ENCODE measurements at regions of chr4 and their contacts with region 1.

Region 1: GRCh38 chr4:42568610-42569207 is 88.2 kb downstream of the ATP8A1 start:
- DNase-seq: peak; percentile 34
- H3K4me3 ChIP-seq: no peak overlapping the region
- H3K27ac ChIP-seq: no peak overlapping the region
- H3K4me1 ChIP-seq: no peaks in the 10 kb centered on the region
- H3K27me3 ChIP-seq: peaks cover 2% of the 10 kb centered on the region
- CTCF ChIP-seq: peak; percentile 52 to 75

Region 2: GRCh38 chr4:42865572-42866189 is 297.0 kb after region 1 on chr4:
- CTCF ChIA-PET with region 1: interaction called, 5 read pairs
- dilution Hi-C with region 1: no loop called
- in situ Hi-C with region 1: loop called (anchors 5 kb)
- intact Hi-C with region 1: loop called (anchors 1 kb)
- DNase-seq: peak; percentile 46
- H3K4me3 ChIP-seq: no peak overlapping the region
- H3K27ac ChIP-seq: no peak overlapping the region
- H3K4me1 ChIP-seq: no peaks in the 10 kb centered on the region
- H3K27me3 ChIP-seq: no peaks in the 10 kb centered on the region
- CTCF ChIP-seq: peak; percentile 70 to 82

Region 3: GRCh38 chr4:42871671-42872290 is 303.1 kb after region 1 on chr4:
- CTCF ChIA-PET with region 1: interaction called, 5 read pairs
- dilution Hi-C with region 1: no loop called
- in situ Hi-C with region 1: loop called in 1 of 2 experiments (anchors 5 kb)
- intact Hi-C with region 1: no loop called
- DNase-seq: no peak
- H3K4me3 ChIP-seq: no peak overlapping the region
- H3K27ac ChIP-seq: no peak overlapping the region
- H3K4me1 ChIP-seq: no peaks in the 10 kb centered on the region
- H3K27me3 ChIP-seq: peaks cover 3% of the 10 kb centered on the region
- CTCF ChIP-seq: no peak

Region 4: GRCh38 chr4:42965326-42965725 is 396.6 kb after region 1 on chr4:
- CTCF ChIA-PET with region 1: interaction called, 4 read pairs
- dilution Hi-C with region 1: no loop called
- in situ Hi-C with region 1: no loop called
- intact Hi-C with region 1: loop called (anchors 5 kb)
- DNase-seq: no peak
- H3K4me3 ChIP-seq: no peak overlapping the region
- H3K27ac ChIP-seq: no peak overlapping the region
- H3K4me1 ChIP-seq: no peaks in the 10 kb centered on the region
- H3K27me3 ChIP-seq: no peaks in the 10 kb centered on the region
- CTCF ChIP-seq: peak; percentile 19 to 48

Measured in mammary epithelial cell (primary cell).